ENCODE measurements at regions of chr4 and their contacts with region 1.

Region 1: DNA sequence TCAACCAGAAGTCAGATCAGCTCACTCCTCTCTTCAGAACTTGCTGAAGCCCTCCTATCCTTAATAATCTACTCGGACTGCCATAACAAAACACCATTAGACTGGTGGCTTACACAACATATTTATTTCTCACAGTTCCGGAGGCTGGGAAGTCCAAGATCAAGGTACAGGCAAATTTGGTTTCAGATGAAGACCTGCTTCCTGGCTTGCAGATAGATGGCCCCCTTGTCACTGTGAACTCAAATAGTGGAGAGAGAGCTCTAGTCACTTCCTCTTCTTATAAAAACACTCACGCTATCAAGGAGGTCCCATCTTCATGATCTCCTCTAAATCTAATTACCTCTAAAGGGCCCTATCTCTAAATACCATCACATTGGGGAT is 125.1 kb downstream of the CAMK2D start:
- DNase-seq: peak; percentile 26
- H3K4me3 Mint-ChIP-seq: peak overlapping the region; percentile 23
- H3K27ac Mint-ChIP-seq: peak overlapping the region; percentile 83
- H3K4me1 Mint-ChIP-seq: peaks cover 46% of the 10 kb centered on the region
- H3K27me3 Mint-ChIP-seq: no peaks in the 10 kb centered on the region

Region 2: DNA sequence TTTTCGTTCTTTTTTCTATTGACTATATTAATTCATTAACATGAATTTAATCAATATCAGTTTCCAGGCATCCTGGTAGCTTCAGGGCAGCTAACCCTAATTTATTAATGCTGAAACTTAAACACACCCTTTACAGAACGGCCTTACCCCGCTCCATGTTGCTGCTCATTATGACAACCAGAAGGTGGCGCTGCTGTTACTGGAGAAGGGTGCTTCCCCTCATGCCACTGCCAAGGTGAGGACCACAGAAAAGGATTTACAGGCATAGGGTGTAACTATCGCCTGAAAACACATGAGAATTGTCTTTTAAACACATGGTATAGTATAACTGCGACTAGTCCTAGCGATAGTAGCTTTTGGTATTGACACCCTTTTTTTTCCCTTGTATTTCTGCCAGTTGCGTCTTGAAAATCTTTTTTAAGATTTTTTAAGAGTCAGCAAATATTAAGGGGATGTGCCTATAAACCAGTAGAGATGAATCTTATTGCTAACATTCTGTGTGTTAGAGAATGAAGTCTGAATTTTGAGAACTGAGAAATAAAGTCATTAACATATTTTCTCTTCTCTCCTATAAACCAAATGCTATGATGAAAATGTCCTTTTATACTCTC is 358.0 kb before region 1 on chr4:
- CTCF ChIA-PET with region 1: no interaction called
- intact Hi-C with region 1: no loop called
- DNase-seq: peak; percentile 88
- H3K4me3 Mint-ChIP-seq: no peak overlapping the region
- H3K27ac Mint-ChIP-seq: no peak overlapping the region
- H3K4me1 Mint-ChIP-seq: no peaks in the 10 kb centered on the region
- H3K27me3 Mint-ChIP-seq: peaks cover 15% of the 10 kb centered on the region

Region 3: GRCh38 chr4:113625902-113626301 is 10.5 kb before region 1 on chr4:
- CTCF ChIA-PET with region 1: interaction called, 3 read pairs
- intact Hi-C with region 1: loop called (anchors 1 kb)
- DNase-seq: no peak
- H3K4me3 Mint-ChIP-seq: no peak overlapping the region
- H3K27ac Mint-ChIP-seq: peak overlapping the region; percentile 59
- H3K4me1 Mint-ChIP-seq: peaks cover 42% of the 10 kb centered on the region
- H3K27me3 Mint-ChIP-seq: no peaks in the 10 kb centered on the region

Region 4: DNA sequence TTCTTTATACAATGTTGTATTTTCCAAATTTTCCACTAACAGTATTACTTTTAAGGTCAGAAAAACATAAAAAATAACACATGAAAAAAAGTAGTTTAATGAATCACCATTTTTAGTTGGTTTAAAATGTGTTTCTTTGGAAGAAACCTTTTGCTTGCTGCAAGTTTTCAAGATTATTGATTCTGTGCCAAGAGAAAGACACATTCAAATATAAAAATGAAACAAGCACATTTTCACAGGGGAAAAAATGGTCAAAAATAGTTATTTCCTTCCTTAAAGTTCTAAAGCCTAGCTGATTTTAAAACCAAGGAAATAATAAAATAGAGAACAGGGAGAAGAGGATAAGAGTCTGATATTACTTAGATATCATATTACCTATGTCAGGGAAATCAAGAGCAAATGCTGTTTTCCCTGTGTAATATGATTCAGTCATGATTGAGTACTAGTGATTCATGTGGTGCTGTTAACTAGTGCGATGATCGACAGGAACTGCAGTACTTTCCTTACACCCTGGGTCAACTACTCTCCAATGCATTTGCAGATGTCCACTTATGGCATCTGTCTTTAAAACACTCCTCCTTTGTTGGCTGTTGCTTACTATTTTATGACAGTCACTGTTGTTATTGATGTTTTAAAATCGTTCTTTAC is 21.3 kb after region 1 on chr4:
- CTCF ChIA-PET with region 1: no interaction called
- intact Hi-C with region 1: no loop called
- DNase-seq: no peak
- H3K4me3 Mint-ChIP-seq: no peak overlapping the region
- H3K27ac Mint-ChIP-seq: no peak overlapping the region
- H3K4me1 Mint-ChIP-seq: peaks cover 38% of the 10 kb centered on the region
- H3K27me3 Mint-ChIP-seq: no peaks in the 10 kb centered on the region

Region 5: GRCh38 chr4:113673450-113673849 is 37.0 kb after region 1 on chr4:
- CTCF ChIA-PET with region 1: interaction called, 5 read pairs
- intact Hi-C with region 1: loop called (anchors 2 kb)
- DNase-seq: peak; percentile 71
- H3K4me3 Mint-ChIP-seq: no peak overlapping the region
- H3K27ac Mint-ChIP-seq: peak overlapping the region; percentile 71
- H3K4me1 Mint-ChIP-seq: peaks cover 46% of the 10 kb centered on the region
- H3K27me3 Mint-ChIP-seq: no peaks in the 10 kb centered on the region

Region 6: GRCh38 chr4:113744667-113745240 is 108.3 kb after region 1 on chr4:
- CTCF ChIA-PET with region 1: no interaction called
- intact Hi-C with region 1: loop called (anchors 5 kb)
- DNase-seq: peak; percentile 25
- H3K4me3 Mint-ChIP-seq: no peak overlapping the region
- H3K27ac Mint-ChIP-seq: no peak overlapping the region
- H3K4me1 Mint-ChIP-seq: peaks cover 29% of the 10 kb centered on the region
- H3K27me3 Mint-ChIP-seq: no peaks in the 10 kb centered on the region

Region 7: DNA sequence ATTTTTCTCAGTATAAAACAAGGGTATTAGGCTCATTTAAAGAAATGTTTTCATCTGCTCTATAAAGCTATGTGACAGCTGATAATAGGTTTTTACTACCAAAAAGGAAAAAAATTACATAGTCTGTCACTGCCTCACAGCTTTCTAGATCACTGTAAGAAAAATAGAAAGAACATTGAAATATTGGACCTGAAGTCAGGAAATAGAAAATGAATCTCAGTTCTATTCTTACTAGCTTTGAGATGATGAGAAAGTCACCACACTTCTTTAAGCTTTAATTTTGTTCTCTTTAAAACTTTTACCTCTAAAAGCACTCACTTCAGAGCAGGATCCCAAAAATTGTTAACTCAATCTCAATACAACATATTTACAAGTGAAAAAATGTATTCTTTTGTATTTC is 170.4 kb after region 1 on chr4:
- CTCF ChIA-PET with region 1: no interaction called
- intact Hi-C with region 1: no loop called
- DNase-seq: no peak
- H3K4me3 Mint-ChIP-seq: no peak overlapping the region
- H3K27ac Mint-ChIP-seq: no peak overlapping the region
- H3K4me1 Mint-ChIP-seq: peaks cover 14% of the 10 kb centered on the region
- H3K27me3 Mint-ChIP-seq: no peaks in the 10 kb centered on the region

Region 8: DNA sequence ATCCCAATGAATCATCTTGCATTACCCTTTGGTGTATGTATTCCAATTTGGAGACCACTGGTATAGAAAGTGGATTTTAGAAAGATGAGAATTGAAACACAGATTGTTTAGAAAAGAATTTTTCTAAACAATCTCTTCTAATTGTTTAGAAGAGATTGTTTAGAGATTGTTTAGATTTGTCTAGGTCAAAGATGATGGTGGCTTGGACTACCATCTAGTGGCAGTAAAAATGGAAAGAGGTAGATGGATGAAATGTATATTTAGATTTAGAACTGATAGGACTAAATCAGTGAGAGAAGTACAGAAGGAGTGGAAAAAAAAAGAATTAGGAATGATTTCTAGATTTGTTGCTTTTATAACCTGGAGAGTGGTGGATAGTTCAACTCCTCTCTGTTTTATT is 272.4 kb after region 1 on chr4:
- CTCF ChIA-PET with region 1: no interaction called
- intact Hi-C with region 1: loop called (anchors 5 kb)
- DNase-seq: no peak
- H3K4me3 Mint-ChIP-seq: no peak overlapping the region
- H3K27ac Mint-ChIP-seq: no peak overlapping the region
- H3K4me1 Mint-ChIP-seq: peaks cover 25% of the 10 kb centered on the region
- H3K27me3 Mint-ChIP-seq: no peaks in the 10 kb centered on the region

Measured in activated naive CD4-positive, alpha-beta T cell treated with anti-CD3 and anti-CD28 coated beads for 36 hours (primary cell).